ENCODE measurements at regions of chr9 and their contacts with region 1.

Region 1: GRCh38 chr9:109171926-109172325 is 4.9 kb upstream of the FRRS1L start:
- DNase-seq: no peak
- H3K4me3 ChIP-seq: no peak overlapping the region
- H3K27ac ChIP-seq: no peak overlapping the region
- H3K4me1 ChIP-seq: peaks cover 0 to 4% of the 10 kb centered on the region in 2 experiments; a peak in 1 of 4 replicates
- H3K27me3 ChIP-seq: 0 out of 2 replicates have a peak, but pooled peaks cover 5% of the 10 kb centered on the region
- CTCF ChIP-seq: no peak
- EP300 ChIP-seq: no peak
- RAD21 ChIP-seq: no peak

Region 2: GRCh38 chr9:109182940-109183798 is 11.2 kb after region 1 on chr9:
- CTCF ChIA-PET with region 1: interaction called, 19 read pairs
- POLR2A ChIA-PET with region 1: no interaction called
- DNase-seq: peak; percentile 62
- H3K4me3 ChIP-seq: no peak overlapping the region
- H3K27ac ChIP-seq: no peak overlapping the region
- H3K4me1 ChIP-seq: peaks cover 0 to 1% of the 10 kb centered on the region in 2 experiments; a peak in 1 of 4 replicates
- H3K27me3 ChIP-seq: no peaks in the 10 kb centered on the region
- CTCF ChIP-seq: peak; percentile 56
- EP300 ChIP-seq: no peak
- RAD21 ChIP-seq: peak; percentile 51